ENCODE measurements at regions of chr3 and their contacts with region 1.

Region 1: GRCh38 chr3:146160964-146161662 is at the start of gene PLOD2:
- DNase-seq: peak; percentile 91
- H3K4me3 ChIP-seq: peak within 1 kb of the TSS; percentile 72 to 91 (median 86)
- H3K27ac ChIP-seq: peak within 1 kb of the TSS; percentile 93 to 94 (median 93)
- H3K4me1 ChIP-seq: peaks cover 0 to 65% (median 46%) of the 10 kb centered on the region in 4 donors
- H3K27me3 ChIP-seq: no peaks in the 10 kb centered on the region
- CTCF ChIP-seq: no peak
- EP300 ChIP-seq: no peak
- POLR2A ChIP-seq: peak; percentile 25 to 35
- total RNA-seq, gene PLOD2: 63.3 to 79.9 (median 75.5) TPM

Region 2: DNA sequence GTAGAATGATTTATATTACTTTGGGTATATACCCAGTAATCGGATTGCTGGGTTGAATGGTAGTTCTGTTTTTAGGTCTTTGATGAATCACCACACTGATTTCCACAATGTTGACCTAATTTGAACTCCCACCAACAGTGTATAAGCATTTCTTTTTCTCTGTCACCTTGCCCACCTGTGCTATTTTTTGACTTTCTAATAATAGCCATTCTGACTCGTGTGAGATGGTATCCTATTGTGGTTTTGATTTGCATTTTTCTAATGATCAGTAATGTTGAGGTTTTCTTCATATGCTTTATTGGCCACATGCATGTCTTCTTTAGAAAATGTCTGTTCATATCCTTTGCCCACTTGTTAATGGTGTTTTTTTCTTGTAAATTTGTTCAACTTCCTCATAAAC is 340.9 kb before region 1 on chr3:
- intact Hi-C with region 1: no loop called
- DNase-seq: no peak
- H3K4me3 ChIP-seq: no peak overlapping the region
- H3K27ac ChIP-seq: no peak overlapping the region
- H3K4me1 ChIP-seq: no peaks in the 10 kb centered on the region
- H3K27me3 ChIP-seq: no peaks in the 10 kb centered on the region
- CTCF ChIP-seq: no peak
- EP300 ChIP-seq: no peak
- POLR2A ChIP-seq: no peak

Region 3: DNA sequence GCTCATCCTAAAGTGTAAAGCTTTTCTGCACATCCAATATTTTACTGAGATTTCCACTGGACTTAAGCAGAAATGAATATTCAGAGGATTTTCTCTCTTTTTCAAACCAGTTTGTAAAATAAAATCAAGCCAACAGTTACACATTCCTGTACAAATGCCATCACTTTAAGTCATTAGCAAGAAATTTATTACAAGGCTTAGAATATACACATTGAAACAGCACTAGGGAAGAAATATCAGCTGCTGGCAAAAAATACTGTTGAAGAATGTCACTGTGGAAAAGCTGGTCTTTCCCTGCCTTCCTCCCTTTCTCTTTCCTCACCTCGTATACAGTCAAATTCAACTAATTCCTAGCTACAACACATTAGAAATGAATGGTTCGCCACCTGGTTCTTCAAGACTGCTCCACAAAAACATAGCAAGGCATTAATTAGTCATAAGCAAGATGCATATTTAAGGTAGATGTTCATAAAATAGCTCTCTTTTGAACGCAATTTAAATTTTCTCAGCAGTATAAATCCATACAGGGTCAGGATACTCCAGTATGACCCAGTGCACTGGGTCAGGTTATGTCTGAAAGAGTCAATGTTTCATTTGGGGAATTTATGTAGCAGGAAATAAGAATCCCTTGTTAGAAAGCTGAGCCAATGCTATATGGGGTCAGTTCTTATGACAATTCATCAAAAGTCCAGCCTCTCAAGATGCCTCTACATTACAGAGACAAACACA is 21.4 kb before region 1 on chr3:
- intact Hi-C with region 1: loop called (anchors 2 kb)
- DNase-seq: no peak
- H3K4me3 ChIP-seq: no peak overlapping the region
- H3K27ac ChIP-seq: peak overlapping the region; percentile 30 to 78 (median 73)
- H3K4me1 ChIP-seq: peaks cover 0 to 85% (median 70%) of the 10 kb centered on the region in 4 donors
- H3K27me3 ChIP-seq: no peaks in the 10 kb centered on the region
- CTCF ChIP-seq: no peak
- EP300 ChIP-seq: no peak
- POLR2A ChIP-seq: no peak

Region 4: GRCh38 chr3:146218880-146219866 is 58.1 kb after region 1 on chr3:
- intact Hi-C with region 1: no loop called
- DNase-seq: no peak
- H3K4me3 ChIP-seq: no peak overlapping the region
- H3K27ac ChIP-seq: no peak overlapping the region
- H3K4me1 ChIP-seq: peaks cover 0 to 21% (median 10%) of the 10 kb centered on the region in 4 donors
- H3K27me3 ChIP-seq: no peaks in the 10 kb centered on the region
- CTCF ChIP-seq: peak; percentile 33 to 70 (median 60)
- EP300 ChIP-seq: no peak
- POLR2A ChIP-seq: no peak